ENCODE measurements at regions of chr9 and their contacts with region 1.

Region 1: DNA sequence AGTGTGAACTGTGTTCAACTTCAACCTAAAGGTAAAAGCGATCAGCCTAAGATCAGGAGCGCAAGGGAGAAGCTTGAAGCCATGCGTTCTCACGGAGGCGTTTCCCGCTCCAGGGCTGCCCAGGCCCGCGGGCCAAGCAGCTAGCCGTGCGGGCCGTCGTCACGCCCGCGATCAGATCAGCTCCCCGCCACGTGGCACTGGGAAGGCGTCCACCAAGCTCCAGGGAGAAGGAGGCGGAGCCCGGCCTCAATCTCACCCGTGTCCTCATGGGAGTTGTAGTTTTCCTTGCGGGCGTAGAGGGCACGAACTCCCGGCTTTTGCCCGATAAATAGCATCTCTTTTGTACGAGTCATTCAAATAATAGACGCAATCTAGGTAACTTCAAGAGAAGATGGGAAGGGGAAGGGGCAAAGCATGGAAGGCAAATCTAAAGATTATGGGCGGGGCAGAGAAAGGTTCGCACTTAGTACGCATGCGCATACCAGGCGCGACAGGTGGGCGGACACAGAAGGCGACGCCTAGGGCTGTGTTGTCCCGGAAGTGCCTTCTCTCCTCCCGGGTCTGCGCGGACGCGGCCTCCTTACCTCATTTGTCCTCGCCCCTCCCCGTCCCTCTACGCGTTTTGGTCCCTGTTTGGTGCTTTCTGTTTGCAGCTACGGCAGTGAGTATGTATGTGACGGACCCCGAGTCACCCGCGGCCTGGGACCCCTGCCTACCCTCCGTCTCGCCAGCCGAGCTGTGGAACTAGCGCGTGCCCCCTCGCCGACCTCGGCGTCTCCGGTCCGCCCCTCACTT is 40.8 kb upstream of the ZCCHC7 start:
- DNase-seq: peak; percentile 74 to 96
- H3K4me3 ChIP-seq: peak overlapping the region; percentile 85 to 88
- H3K27ac ChIP-seq: peak overlapping the region; percentile 90 to 91
- H3K4me1 ChIP-seq: no peaks in the 10 kb centered on the region
- H3K27me3 ChIP-seq: no peaks in the 10 kb centered on the region
- CTCF ChIP-seq: no peak

Region 2: DNA sequence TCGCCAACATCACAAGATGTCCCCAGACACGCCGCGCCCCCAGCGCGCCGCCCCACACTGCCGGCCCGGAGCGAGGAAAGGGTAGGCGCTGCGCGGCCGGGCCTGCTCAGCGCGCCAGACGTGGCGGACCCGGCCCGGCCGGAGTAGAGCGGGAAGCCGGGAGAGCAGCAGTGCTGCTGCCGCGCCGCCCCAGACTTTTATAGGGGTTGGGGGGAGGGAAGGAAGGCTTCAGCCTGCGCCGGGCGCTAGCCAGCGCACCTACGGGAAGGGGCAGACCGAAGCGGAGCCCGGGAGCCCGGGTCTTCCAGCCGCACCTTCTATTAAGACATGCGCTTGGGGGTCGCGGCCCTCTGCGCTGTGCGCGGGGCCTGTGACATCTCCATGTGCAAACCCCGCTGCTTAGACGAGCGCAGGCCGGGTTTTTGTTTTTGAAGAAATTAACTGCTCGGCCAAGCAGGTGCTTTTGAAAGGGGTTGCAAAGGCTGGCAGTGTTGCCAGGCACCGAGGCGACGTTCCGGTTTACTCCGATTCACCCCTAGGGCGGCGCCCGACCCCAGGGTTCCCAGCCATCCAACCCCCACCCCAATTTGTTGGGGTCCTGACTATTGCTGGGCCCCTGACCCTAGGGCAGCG is 45.1 kb before region 1 on chr9:
- intact Hi-C with region 1: loop called (anchors 5 kb)
- DNase-seq: no peak
- H3K4me3 ChIP-seq: peak overlapping the region; percentile 41 to 43
- H3K27ac ChIP-seq: no peak overlapping the region
- H3K4me1 ChIP-seq: peaks cover 13 to 25% of the 10 kb centered on the region in 2 donors
- H3K27me3 ChIP-seq: peaks cover 69% of the 10 kb centered on the region
- CTCF ChIP-seq: no peak

Region 3: GRCh38 chr9:37119907-37120842 is 40.6 kb after region 1 on chr9 and contains the start of gene ZCCHC7:
- intact Hi-C with region 1: loop called (anchors 1 kb)
- DNase-seq: peak; percentile 82 to 98
- H3K4me3 ChIP-seq: peak within 1 kb of the TSS; percentile 88 to 95
- H3K27ac ChIP-seq: peak within 1 kb of the TSS; percentile 95 to 96
- H3K4me1 ChIP-seq: peaks cover 0 to 13% of the 10 kb centered on the region in 2 donors
- H3K27me3 ChIP-seq: no peaks in the 10 kb centered on the region
- CTCF ChIP-seq: no peak
- total RNA-seq, gene ZCCHC7: 25.1 TPM

Measured in ascending aorta (tissue), 2 donors.